ENCODE measurements at regions of chr7 and their contacts with region 1.

Region 1: DNA sequence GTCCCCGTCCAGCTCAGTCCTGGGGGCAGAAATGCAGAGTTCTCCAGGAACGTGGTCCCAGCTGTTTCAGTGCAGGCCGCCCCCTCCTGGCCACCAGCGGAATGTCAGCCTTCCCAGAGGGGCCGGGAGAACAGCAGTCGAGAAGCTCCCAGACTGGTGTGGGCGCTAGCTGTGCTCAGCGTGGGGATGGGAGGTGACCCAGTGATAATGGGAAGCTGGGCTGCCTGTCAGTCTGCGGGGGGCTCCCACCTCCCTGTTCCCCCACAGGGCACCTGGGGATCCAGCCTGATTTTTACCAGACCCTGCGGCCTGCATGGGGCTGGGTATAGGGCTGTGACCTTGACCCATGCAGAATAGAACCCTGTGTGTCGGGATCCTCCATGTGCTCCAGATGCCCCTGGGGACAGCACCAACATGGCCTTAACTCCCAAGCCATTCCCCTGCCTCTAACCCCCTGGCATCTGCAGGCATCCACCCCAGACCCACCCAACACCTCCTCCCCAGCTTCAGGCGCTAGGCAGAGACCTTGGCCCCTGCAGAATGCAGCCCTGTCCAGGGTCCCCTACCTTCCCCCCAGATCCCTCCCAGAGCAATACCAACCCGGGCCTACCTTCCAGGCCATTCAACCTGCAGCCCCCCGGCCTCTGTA is 946 bp upstream of the ELN start:
- DNase-seq: no peak
- H3K4me3 ChIP-seq: no peak overlapping the region
- H3K27ac ChIP-seq: no peak overlapping the region
- H3K27me3 ChIP-seq: peaks cover 15% of the 10 kb centered on the region
- CTCF ChIP-seq: peak; percentile 93

Region 2: GRCh38 chr7:73738612-73739374 is 288.2 kb before region 1 on chr7 and contains the start of gene ABHD11:
- CTCF ChIA-PET with region 1: no interaction called
- POLR2A ChIA-PET with region 1: no interaction called
- DNase-seq: peak; percentile 92
- H3K4me3 ChIP-seq: peak within 1 kb of the TSS; percentile 89
- H3K27ac ChIP-seq: peak within 1 kb of the TSS; percentile 31
- H3K27me3 ChIP-seq: no peaks in the 10 kb centered on the region
- CTCF ChIP-seq: no peak
- polyA plus RNA-seq, gene ABHD11: 5.1 and 7.5 TPM in 2 replicates

Region 3: GRCh38 chr7:73865738-73866445 is 161.1 kb before region 1 on chr7:
- CTCF ChIA-PET with region 1: interaction called, 38 read pairs
- POLR2A ChIA-PET with region 1: interaction called, 3 read pairs
- DNase-seq: no peak
- H3K4me3 ChIP-seq: no peak overlapping the region
- H3K27ac ChIP-seq: no peak overlapping the region
- H3K27me3 ChIP-seq: no peaks in the 10 kb centered on the region
- CTCF ChIP-seq: peak; percentile 84

Region 4: DNA sequence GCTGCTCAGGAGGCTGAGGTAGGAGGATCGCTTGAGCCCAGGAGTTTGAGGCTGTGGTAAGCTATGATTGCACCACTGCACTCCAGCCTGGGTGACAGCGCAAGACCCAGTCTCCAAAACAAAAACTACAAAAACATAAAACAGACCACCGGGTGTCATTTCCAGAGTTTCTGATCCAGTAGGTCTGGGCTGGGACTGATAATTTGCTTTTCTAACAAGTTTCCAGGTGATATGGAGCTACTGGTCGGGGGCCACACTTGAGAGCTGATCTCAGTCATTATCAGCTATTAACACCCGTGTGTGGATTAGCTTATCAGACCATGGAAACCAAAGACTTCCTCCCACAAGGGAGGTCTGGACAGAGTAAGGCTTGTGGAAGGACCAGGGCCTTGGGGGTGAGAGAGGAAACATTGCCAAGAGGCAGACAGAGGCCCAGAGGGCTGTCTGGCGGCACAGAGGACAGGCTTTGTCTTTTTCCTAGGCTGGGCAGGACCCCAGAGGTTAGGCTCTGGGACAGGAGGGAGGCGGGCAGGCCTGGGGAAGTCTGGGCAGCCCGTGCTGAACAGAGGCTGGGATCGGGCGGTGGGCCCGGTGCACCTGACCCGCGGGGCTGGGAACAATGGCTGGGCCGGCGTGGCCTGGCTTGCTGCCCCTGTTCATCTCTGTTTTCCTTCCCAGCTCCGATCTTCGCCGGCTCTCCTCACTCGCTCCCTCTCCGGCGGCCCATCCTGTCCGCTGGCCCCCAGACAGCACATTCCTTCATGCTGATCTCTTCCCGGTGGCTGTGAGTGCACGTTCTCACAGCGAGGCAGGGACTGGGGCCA is 140.8 kb before region 1 on chr7:
- CTCF ChIA-PET with region 1: interaction called, 15 read pairs
- POLR2A ChIA-PET with region 1: no interaction called
- DNase-seq: no peak
- H3K4me3 ChIP-seq: no peak overlapping the region
- H3K27ac ChIP-seq: peak overlapping the region; percentile 68
- H3K27me3 ChIP-seq: peaks cover 3% of the 10 kb centered on the region
- CTCF ChIP-seq: no peak

Region 5: DNA sequence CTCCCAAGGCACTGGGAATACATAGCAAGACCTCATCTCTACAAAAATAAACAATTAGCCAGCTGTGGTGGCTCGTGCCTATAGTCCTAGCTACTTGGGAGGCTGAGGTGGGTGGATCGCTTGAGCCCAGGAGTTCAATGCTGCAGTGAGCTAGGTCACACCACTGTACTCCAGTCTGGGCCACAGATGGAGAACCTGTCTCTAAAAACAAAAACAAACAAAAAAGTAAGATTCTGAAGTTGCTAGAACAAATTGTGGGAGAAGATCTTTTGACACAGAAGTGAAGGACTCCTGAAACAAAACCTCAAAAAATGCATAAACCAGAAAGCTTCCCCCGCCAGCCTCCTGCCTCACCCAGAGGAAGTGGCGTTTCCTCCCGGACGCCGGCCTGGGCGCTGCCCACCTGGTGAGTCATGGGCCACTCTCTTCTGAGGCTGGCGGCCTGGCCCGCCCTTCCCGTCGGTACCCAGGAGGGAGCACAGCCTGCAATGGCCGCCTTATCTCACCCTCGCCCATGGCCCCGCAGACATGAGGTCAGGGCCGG is 24.5 kb before region 1 on chr7:
- CTCF ChIA-PET with region 1: interaction called, 12 read pairs
- POLR2A ChIA-PET with region 1: interaction called, 10 read pairs
- DNase-seq: peak; percentile 68
- H3K4me3 ChIP-seq: no peak overlapping the region
- H3K27ac ChIP-seq: peak overlapping the region; percentile 87
- H3K27me3 ChIP-seq: no peaks in the 10 kb centered on the region
- CTCF ChIP-seq: no peak

Region 6: GRCh38 chr7:74038300-74038961 is 11.4 kb after region 1 on chr7:
- CTCF ChIA-PET with region 1: interaction called, 10 read pairs
- POLR2A ChIA-PET with region 1: no interaction called
- DNase-seq: no peak
- H3K4me3 ChIP-seq: no peak overlapping the region
- H3K27ac ChIP-seq: no peak overlapping the region
- H3K27me3 ChIP-seq: no peaks in the 10 kb centered on the region
- CTCF ChIP-seq: no peak